ENCODE measurements at regions of chr19 and their contacts with region 1.

Region 1: GRCh38 chr19:48795055-48795684 is 15.7 kb downstream of the BCAT2 start:
- DNase-seq: peak; percentile 88 to 99 (median 96)

Region 2: GRCh38 chr19:48720613-48721296 is 74.4 kb before region 1 on chr19:
- intact Hi-C with region 1: no loop called
- DNase-seq: peak; percentile 99 to 100 (median 100)

Region 3: GRCh38 chr19:48835734-48836088 is 40.5 kb after region 1 on chr19:
- intact Hi-C with region 1: loop called (anchors 5 kb)
- DNase-seq: peak; percentile 87 to 97 (median 94)

Region 4: GRCh38 chr19:48970923-48971395 is 175.8 kb after region 1 on chr19:
- intact Hi-C with region 1: loop called (anchors 5 kb)
- DNase-seq: peak in 41 of 42 donors; percentile 64 to 93 (median 82)

Measured in head of caudate nucleus (tissue), 42 donors.